GM18951 (cell line): ENCODE measurements at regions of chr2 and their contacts with region 1.

Region 1: DNA sequence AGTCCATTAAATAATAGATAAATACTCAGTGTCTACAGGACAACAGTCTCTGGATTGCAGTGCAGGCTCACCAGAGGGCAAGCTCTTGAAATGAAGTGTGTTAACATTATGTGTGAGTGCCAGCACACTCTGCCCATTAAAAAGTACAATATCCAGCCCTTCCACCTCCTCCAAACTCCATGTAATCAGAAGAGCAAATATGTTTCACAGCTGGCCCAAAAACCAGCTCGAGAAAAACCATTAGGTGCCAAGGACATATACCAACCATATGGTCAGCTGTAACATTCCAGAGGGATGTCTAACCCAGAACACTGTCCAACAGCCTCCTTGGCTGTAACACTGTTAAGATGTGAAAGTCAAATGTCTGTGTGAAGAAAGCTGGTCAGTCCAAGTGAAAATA is 112.2 kb downstream of the ZNF385B start:
- POLR2A ChIP-seq: no peak

Region 2: GRCh38 chr2:178761759-178762371 is 987.3 kb before region 1 on chr2:
- in situ Hi-C with region 1: loop called (anchors 25 kb)
- POLR2A ChIP-seq: no peak

Region 3: DNA sequence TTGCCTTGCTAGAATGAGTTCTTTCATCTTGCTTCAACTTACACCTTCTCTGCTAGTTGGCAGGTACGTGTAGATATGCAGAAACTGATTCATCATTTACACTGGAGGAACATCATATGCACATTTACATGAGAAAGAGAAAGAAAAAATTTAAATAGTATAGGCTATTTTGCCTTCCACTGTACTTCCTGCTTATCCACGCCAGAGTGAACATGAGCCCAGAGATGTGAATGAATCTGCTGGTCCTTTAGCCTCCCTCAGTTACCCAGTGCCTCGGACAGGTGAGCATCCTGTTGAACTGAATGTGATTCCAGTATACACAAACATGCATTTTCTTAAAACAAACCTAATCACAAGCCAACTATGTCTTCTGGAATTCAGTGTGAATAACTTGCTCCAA is 568.2 kb before region 1 on chr2:
- in situ Hi-C with region 1: loop called (anchors 25 kb)
- POLR2A ChIP-seq: no peak

Region 4: GRCh38 chr2:179440642-179441251 is 308.5 kb before region 1 on chr2:
- in situ Hi-C with region 1: loop called (anchors 25 kb)
- POLR2A ChIP-seq: no peak